ENCODE measurements at regions of chr18 and their contacts with region 1.

Region 1: DNA sequence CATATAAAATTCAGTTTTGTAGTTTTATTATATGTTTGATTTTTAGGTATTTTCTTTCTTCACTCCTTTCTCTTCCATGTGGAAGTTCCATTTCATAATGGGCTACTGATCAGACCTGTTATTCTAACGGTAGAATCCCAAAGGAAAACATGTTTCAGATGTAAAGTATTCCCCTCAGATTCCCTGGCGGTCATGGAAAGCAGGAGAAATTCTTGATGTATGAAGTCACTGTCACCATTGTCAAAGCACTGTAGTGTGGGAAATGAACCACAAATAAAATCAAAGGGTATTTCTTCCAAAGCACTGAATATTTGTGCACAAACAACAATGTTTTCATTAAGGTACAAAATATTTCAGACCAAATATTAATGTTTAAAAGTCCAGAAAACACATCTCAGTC is 237.3 kb upstream of the KLHL14 start:
- DNase-seq: peak; percentile 88
- H3K4me3 ChIP-seq: no peak overlapping the region
- H3K27ac ChIP-seq: peak overlapping the region; percentile 30
- H3K4me1 ChIP-seq: peaks cover 37% of the 10 kb centered on the region
- H3K27me3 ChIP-seq: no peaks in the 10 kb centered on the region
- CTCF ChIP-seq: no peak
- POLR2A ChIP-seq: no peak

Region 2: DNA sequence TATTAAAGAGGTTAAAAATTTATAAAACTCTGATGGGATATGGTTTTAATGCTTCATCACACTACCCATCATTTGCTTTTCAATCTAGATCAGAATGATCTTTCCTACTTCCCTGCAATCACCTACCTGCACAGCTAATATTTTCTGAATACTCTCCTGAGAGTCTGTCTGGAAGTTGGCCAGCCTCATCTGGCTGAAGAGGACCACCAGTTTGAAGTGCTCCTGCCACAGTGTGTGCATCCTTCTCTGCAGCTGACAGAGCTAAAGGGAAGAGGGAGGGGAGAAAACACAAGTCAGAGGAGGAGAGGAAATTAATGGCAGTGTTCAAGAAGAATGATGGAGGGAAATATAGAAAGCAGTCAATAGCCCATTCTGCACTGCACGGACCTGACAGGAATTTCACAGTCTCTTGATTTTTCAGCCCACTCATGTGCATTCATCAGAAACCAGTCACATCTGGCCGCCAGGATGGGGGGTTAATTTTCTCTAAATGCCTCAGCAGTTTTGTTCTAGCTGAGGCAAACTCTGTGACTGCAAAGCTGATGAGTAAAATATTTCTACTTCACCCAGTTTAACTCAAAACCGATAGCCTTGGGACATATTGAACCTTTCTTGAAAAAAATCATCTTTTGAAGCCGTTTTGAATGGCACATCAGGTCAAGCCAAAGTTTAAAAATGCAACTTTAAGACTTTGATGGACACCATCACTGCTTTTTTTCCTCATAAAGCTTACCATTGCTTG is 35.6 kb before region 1 on chr18:
- CTCF ChIA-PET with region 1: interaction called, 4 read pairs
- POLR2A ChIA-PET with region 1: no interaction called
- dilution Hi-C with region 1: no loop called
- intact Hi-C with region 1: loop called (anchors 5 kb)
- DNase-seq: no peak
- H3K4me3 ChIP-seq: no peak overlapping the region
- H3K27ac ChIP-seq: no peak overlapping the region
- H3K4me1 ChIP-seq: no peaks in the 10 kb centered on the region
- H3K27me3 ChIP-seq: no peaks in the 10 kb centered on the region
- CTCF ChIP-seq: no peak
- POLR2A ChIP-seq: no peak

Region 3: DNA sequence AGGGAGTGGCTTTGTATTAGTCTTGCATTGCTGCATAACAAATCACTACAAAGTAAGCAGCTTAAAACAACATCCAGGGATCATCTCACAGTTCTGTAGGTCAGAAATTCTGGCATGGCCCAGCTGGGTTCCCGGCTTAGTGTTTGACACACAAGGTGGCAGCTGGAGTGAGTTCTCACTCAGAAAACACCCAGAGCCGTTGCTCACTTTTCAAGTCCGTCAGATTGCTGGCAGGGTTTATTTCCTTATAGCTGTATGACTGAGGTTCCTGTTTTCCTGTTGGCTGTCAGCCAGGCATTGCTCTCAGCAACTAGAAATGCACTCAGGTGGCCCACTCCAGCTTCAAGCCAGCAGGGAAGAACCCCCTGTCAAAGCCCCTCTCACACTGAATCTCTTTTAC is 106.2 kb after region 1 on chr18:
- CTCF ChIA-PET with region 1: no interaction called
- POLR2A ChIA-PET with region 1: no interaction called
- dilution Hi-C with region 1: no loop called
- intact Hi-C with region 1: loop called (anchors 2 kb)
- DNase-seq: peak; percentile 87
- H3K4me3 ChIP-seq: no peak overlapping the region
- H3K27ac ChIP-seq: no peak overlapping the region
- H3K4me1 ChIP-seq: peaks cover 11% of the 10 kb centered on the region
- H3K27me3 ChIP-seq: no peaks in the 10 kb centered on the region
- CTCF ChIP-seq: no peak
- POLR2A ChIP-seq: no peak

Region 4: GRCh38 chr18:33184958-33185357 is 174.8 kb after region 1 on chr18:
- CTCF ChIA-PET with region 1: no interaction called
- POLR2A ChIA-PET with region 1: no interaction called
- dilution Hi-C with region 1: no loop called
- intact Hi-C with region 1: loop called (anchors 2 kb)
- DNase-seq: peak; percentile 12
- H3K4me3 ChIP-seq: no peak overlapping the region
- H3K27ac ChIP-seq: peak overlapping the region; percentile 77
- H3K4me1 ChIP-seq: peaks cover 16% of the 10 kb centered on the region
- H3K27me3 ChIP-seq: no peaks in the 10 kb centered on the region
- CTCF ChIP-seq: no peak
- POLR2A ChIP-seq: no peak

Measured in endothelial cell of umbilical vein (primary cell).